ENCODE measurements at regions of chr12 and their contacts with region 1.

Region 1: GRCh38 chr12:31406345-31406744 is 80.4 kb upstream of the SINHCAF start:
- DNase-seq: no peak
- H3K4me3 ChIP-seq: no peak overlapping the region
- H3K27ac ChIP-seq: no peak overlapping the region
- H3K4me1 ChIP-seq: no peaks in the 10 kb centered on the region
- H3K27me3 ChIP-seq: no peaks in the 10 kb centered on the region
- CTCF ChIP-seq: no peak

Region 2: DNA sequence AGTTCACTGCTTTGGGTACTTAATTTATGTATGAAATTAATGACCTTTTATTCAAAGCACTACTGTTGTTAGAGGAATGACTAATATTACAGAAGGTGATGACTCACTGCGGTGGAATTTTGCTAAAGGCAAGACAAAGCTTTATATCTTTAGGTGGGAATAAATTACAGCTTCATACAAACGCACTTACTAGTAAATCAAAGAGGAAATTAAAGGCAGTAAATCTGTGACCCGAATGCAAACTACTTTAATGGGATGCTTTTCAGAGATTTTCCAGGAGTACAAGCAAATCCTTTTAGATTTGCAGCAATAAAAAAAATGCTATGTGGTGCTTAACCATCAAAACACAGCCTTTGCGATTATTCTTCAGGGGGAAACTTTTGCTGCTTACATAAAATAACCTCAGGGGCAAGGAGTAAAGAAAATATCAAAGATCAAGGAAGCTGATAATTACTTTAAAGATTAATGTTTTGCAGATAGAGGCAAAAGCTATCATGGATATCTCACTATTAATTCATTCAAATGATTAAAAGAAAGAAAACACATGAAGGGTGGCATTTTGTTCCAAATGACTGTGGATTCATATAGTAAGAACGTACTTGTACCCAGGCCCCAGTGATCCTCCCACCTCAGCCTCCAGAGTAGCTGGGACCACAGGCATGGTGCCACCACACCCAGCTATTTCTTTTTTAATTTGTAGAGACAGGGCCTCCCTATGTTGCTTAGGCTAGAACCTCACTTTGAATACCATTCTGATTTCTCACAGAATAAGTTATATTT is 85.7 kb after region 1 on chr12:
- intact Hi-C with region 1: no loop called
- DNase-seq: no peak
- H3K4me3 ChIP-seq: no peak overlapping the region
- H3K27ac ChIP-seq: peak overlapping the region; percentile 33 to 39
- H3K4me1 ChIP-seq: peaks cover 4 to 23% of the 10 kb centered on the region in 2 donors
- H3K27me3 ChIP-seq: no peaks in the 10 kb centered on the region
- CTCF ChIP-seq: no peak

Region 3: DNA sequence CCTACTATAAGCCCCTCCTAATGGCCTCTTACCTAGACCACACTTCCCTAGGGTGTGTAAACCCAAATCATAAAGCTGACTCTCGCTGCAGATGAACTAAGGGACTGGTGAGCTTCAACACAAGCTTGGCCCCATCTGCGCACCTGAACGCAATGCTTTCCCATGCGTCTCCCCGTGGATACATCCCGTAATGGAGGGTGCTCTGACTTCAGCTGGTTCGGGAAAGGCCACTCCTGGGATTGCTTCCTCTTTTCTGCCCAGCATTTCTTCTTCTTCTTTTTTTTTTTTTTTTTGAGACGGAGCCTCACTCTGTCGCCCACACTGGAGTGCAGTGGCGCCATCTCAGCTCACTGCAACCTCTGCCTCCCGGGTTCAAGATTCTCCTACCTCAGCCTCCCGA is 225.4 kb after region 1 on chr12:
- intact Hi-C with region 1: loop called (anchors 1 kb)
- DNase-seq: no peak
- H3K4me3 ChIP-seq: no peak overlapping the region
- H3K27ac ChIP-seq: no peak overlapping the region
- H3K4me1 ChIP-seq: peaks cover 0 to 6% of the 10 kb centered on the region in 2 donors
- H3K27me3 ChIP-seq: no peaks in the 10 kb centered on the region
- CTCF ChIP-seq: no peak